Naive thymus-derived CD4-positive, alpha-beta T cell (primary cell): ENCODE measurements at regions of chr19 and their contacts with region 1.

Region 1: DNA sequence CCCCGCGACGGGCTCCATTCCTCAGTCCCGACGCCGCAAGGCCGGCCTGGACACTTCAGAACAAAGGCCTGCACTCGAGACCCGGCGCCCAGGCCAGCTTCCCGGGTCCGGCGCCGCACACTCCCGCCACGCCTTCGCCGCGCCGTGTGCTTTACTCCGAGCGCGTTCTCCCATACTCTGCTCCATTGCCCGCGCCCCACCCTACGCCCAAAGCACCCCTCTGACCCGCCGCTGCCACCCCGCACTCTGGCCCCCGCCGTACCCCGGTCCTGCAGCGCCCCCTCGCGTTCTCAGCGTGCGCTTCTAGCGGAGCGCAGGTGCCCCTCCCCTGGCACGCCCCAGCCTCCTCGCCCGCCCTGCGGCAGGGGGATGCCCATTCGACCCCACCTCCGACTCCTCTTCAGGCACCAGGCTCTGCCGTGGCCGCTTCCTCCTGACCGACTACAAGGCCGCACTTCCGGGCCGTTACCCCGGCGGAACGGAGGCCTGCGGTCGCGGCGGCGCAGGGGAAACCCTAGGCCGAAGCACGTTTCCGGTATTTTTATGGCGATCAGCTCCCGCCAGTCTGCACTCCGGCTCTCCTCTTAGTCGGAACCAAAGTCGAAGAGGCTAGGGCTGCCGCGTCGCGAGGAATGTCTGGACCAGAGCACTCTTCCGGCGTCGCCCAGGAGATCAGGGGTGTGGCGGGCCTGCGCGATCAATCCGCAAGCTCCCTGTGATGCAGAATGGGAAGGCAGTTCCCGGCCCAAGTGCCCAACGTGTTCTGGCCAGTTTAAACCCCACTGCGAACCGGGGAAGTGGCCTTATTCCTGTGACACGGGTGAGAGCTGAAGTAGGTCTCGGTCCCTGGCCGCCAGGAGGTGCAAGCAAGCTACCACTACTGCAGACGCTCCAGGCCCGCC is at the start of gene ZBTB45:
- DNase-seq: peak; percentile 81 to 97 (median 88)
- ATAC-seq: peak; percentile 89
- H3K4me3 ChIP-seq: peak within 1 kb of the TSS; percentile 76
- H3K4me3 Mint-ChIP-seq: peak within 1 kb of the TSS; percentile 90 to 97 (median 95)
- H3K27ac ChIP-seq: peak within 1 kb of the TSS; percentile 86
- H3K27ac Mint-ChIP-seq: peak within 1 kb of the TSS; percentile 92 to 99 (median 97)
- H3K4me1 ChIP-seq: peaks cover 10 to 14% of the 10 kb centered on the region in 2 donors
- H3K4me1 Mint-ChIP-seq: peaks cover 29 to 43% (median 37%) of the 10 kb centered on the region in 7 donors
- H3K27me3 ChIP-seq: no peaks in the 10 kb centered on the region
- H3K27me3 Mint-ChIP-seq: peaks cover 0 to 3% (median 0%) of the 10 kb centered on the region in 5 donors
- total RNA-seq, gene ZBTB45: 9.8 to 19.2 (median 17.0) TPM

Region 2: DNA sequence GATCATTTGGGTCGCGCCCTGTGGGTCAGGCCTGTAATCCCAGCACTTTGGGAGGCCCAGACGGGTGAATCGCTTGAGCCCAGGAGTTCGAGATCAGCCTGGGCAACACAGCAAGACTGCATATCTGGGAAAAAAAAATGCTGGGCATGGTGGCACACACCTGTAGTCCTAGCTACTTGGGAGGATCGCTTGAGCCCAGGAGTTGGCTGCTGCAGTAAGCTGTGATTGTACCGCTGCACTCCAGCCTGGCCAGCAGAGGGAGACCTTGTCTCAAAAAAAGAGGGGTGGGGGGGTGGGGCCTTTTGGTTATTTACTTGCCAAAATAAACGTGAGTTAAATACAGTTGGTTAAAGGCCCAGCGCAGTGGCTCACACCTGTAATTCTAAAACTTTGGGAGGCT is 300.7 kb before region 1 on chr19:
- CTCF ChIA-PET with region 1: no interaction called
- POLR2A ChIA-PET with region 1: no interaction called
- intact Hi-C with region 1: loop called in 1 of 2 experiments (anchors 2 kb)
- DNase-seq: peak in 3 of 9 donors; percentile 16 to 24 (median 24)
- ATAC-seq: peak; percentile 42
- H3K4me3 ChIP-seq: no peak overlapping the region
- H3K4me3 Mint-ChIP-seq: no peak overlapping the region
- H3K27ac ChIP-seq: no peak overlapping the region
- H3K27ac Mint-ChIP-seq: no peak overlapping the region
- H3K4me1 ChIP-seq: no peaks in the 10 kb centered on the region
- H3K4me1 Mint-ChIP-seq: no peaks in the 10 kb centered on the region
- H3K27me3 ChIP-seq: no peaks in the 10 kb centered on the region
- H3K27me3 Mint-ChIP-seq: peaks cover 0 to 5% (median 0%) of the 10 kb centered on the region in 5 donors

Region 3: DNA sequence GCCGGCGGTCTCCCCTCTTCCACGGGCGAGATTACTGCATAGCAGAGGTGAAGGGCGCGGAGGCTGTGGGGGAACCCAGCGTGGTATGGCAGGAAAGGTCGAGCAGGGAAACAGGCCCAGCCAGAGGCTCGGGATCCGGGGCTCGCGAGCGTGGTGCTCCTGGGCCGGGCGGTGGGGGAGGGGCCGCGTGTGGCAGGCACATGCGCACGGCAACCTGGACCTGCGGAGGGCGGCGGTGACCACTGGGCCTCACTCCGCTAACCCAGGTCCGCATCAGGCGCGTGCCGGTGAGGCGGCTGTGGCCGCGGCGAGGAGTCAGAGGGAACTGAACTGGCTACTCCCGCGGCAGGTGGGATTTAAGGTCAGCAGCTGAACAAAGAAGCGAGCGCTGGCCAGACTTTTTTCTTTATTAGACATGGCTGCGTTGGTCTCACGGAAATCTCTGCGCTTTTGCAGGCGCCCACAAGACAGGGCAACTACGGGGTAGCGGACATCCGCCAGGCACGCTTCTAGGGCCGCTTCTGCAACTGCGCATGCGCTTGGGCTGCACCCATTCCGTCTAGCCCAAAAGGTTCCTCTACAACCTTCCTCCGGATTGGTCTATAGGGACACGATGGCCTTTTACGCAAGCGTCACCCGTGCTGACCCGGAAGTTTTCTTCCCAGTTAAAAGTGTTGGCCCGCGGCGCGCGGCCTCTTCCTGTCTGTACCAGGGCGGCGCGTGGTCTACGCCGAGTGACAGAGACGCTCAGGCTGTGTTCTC is 132.8 kb before region 1 on chr19 and contains the start of gene RPS5:
- CTCF ChIA-PET with region 1: interaction called, 3 read pairs
- POLR2A ChIA-PET with region 1: no interaction called
- intact Hi-C with region 1: loop called (anchors 1 kb)
- DNase-seq: peak; percentile 84 to 98 (median 96)
- ATAC-seq: peak; percentile 97
- H3K4me3 ChIP-seq: peak within 1 kb of the TSS; percentile 75
- H3K4me3 Mint-ChIP-seq: peak within 1 kb of the TSS; percentile 89 to 96 (median 94)
- H3K27ac ChIP-seq: peak within 1 kb of the TSS; percentile 94
- H3K27ac Mint-ChIP-seq: peak within 1 kb of the TSS; percentile 94 to 99 (median 97)
- H3K4me1 ChIP-seq: peaks cover 26% of the 10 kb centered on the region in 2 donors
- H3K4me1 Mint-ChIP-seq: peaks cover 22 to 59% (median 45%) of the 10 kb centered on the region in 7 donors
- H3K27me3 ChIP-seq: no peaks in the 10 kb centered on the region
- H3K27me3 Mint-ChIP-seq: peaks cover 0 to 3% (median 0%) of the 10 kb centered on the region in 5 donors
- total RNA-seq, gene RPS5: 911 to 1,684 (median 1,502) TPM

Region 4: GRCh38 chr19:58416604-58417003 is 103.0 kb before region 1 on chr19:
- CTCF ChIA-PET with region 1: no interaction called
- POLR2A ChIA-PET with region 1: no interaction called
- intact Hi-C with region 1: no loop called
- DNase-seq: no peak
- ATAC-seq: no peak
- H3K4me3 ChIP-seq: no peak overlapping the region
- H3K4me3 Mint-ChIP-seq: no peak overlapping the region
- H3K27ac ChIP-seq: no peak overlapping the region
- H3K27ac Mint-ChIP-seq: no peak overlapping the region
- H3K4me1 ChIP-seq: no peaks in the 10 kb centered on the region
- H3K4me1 Mint-ChIP-seq: peaks cover 0 to 4% (median 0%) of the 10 kb centered on the region in 7 donors
- H3K27me3 ChIP-seq: no peaks in the 10 kb centered on the region
- H3K27me3 Mint-ChIP-seq: no peaks in the 10 kb centered on the region

Region 5: DNA sequence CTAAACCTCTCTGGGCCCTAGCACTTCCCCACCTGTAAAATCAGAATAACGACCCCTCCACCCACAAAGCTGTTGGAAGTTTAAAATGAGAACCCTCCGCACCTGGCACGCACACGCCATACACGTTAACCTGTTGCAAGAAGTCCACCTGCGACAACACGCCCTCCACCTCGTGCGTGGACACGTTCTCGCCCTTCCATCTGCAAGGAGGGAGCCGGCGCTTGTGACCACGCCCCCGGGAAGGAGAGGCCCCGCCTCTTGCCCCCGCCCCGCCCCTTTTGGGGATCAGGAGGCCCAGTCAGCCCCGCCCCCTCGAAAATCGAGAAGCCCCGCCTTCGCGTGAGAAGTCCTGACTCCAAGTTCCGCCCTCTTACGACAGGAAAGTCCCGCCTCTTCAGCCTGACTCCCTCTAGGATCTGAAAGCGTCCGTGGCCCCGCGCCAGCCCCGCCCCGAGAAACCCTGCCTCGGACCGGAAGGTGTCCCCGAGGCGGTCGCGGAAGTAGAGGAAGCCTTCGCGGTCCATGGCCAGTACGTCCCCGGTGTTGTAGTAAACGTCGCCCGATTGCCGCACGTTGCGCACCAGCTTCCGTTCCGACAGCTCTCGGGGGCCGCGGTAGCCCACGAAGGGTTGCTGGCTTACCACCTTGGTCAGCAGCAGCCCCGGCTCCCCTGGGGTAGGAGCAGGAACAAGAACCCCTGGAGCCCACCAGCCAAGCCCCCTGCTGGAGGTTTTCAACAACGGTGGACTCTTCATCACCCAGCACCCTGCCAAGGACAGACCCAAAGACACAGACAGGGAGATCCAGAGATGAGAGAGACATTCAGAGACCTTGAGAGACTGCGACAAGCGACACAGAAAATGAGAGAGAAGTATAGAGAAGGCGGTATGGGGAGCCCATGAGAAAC is 20.3 kb before region 1 on chr19:
- CTCF ChIA-PET with region 1: no interaction called
- POLR2A ChIA-PET with region 1: interaction called, 10 read pairs
- intact Hi-C with region 1: loop called (anchors 1 kb)
- DNase-seq: peak; percentile 76 to 96 (median 87)
- ATAC-seq: peak; percentile 93
- H3K4me3 ChIP-seq: peak overlapping the region; percentile 66
- H3K4me3 Mint-ChIP-seq: peak overlapping the region; percentile 88 to 98 (median 94)
- H3K27ac ChIP-seq: peak overlapping the region; percentile 72
- H3K27ac Mint-ChIP-seq: peak overlapping the region; percentile 90 to 97 (median 95)
- H3K4me1 ChIP-seq: peaks cover 12 to 15% of the 10 kb centered on the region in 2 donors
- H3K4me1 Mint-ChIP-seq: peaks cover 8 to 32% (median 21%) of the 10 kb centered on the region in 7 donors
- H3K27me3 ChIP-seq: no peaks in the 10 kb centered on the region
- H3K27me3 Mint-ChIP-seq: no peaks in the 10 kb centered on the region

Region 6: GRCh38 chr19:58558623-58559274 is 39.1 kb after region 1 on chr19:
- CTCF ChIA-PET with region 1: interaction called, 13 read pairs
- POLR2A ChIA-PET with region 1: interaction called, 32 read pairs
- intact Hi-C with region 1: loop called (anchors 1 kb)
- DNase-seq: peak; percentile 99 to 100 (median 100)
- ATAC-seq: peak; percentile 79
- H3K4me3 ChIP-seq: peak overlapping the region; percentile 97
- H3K4me3 Mint-ChIP-seq: peak overlapping the region; percentile 87 to 98 (median 96)
- H3K27ac ChIP-seq: peak overlapping the region; percentile 97
- H3K27ac Mint-ChIP-seq: peak overlapping the region; percentile 93 to 99 (median 98)
- H3K4me1 ChIP-seq: peaks cover 51 to 63% of the 10 kb centered on the region in 2 donors
- H3K4me1 Mint-ChIP-seq: peaks cover 18 to 86% (median 77%) of the 10 kb centered on the region in 7 donors
- H3K27me3 ChIP-seq: no peaks in the 10 kb centered on the region
- H3K27me3 Mint-ChIP-seq: peaks cover 0 to 4% (median 0%) of the 10 kb centered on the region in 5 donors

Region 7: DNA sequence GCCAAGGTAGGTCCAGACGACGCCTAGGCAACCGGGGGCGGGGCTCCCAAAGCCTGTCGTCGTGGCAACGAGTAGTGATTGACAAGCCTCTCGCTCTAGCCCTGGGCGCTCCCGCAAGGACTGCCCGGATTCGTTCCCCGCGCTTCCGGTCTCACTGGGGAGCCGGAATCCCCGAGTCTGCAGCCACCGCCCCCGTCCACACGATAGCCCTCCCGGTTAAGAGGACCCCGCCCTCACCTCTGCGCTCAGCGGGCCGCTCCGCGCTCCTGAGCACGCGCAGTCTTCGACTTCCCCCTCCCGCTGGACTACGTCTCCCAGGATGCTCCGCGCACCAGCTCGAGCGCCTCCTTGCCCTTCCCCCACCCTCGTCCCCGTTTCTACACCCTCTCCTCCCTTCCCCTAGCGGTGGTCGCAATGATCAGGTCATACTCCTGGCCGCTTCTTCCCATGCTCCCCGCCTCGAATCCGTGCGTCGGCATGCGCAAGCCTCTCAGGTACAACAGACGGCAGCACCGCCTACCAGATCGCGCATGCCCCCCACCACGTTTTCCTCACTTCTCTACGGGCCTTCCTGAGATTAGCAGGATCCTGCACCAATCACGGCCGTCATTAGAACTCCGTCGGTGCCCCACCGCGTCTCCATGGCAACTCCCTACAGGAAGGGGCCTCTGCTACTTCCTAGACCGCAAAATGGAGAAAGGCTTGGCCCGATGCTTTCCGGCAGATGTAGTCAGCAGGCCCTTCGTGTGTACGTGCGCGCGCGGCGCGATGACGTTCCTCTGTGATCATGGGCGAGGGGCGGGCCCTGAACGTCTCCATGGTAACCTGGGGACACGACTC is 53.4 kb after region 1 on chr19 and contains the start of gene MZF1:
- CTCF ChIA-PET with region 1: interaction called, 46 read pairs
- POLR2A ChIA-PET with region 1: interaction called, 45 read pairs
- intact Hi-C with region 1: loop called (anchors 1 kb)
- DNase-seq: peak; percentile 97 to 100 (median 100)
- ATAC-seq: peak; percentile 81
- H3K4me3 ChIP-seq: peak within 1 kb of the TSS; percentile 71
- H3K4me3 Mint-ChIP-seq: peak within 1 kb of the TSS; percentile 82 to 100 (median 98)
- H3K27ac ChIP-seq: peak within 1 kb of the TSS; percentile 97
- H3K27ac Mint-ChIP-seq: peak within 1 kb of the TSS; percentile 97 to 100 (median 100)
- H3K4me1 ChIP-seq: peaks cover 19 to 20% of the 10 kb centered on the region in 2 donors
- H3K4me1 Mint-ChIP-seq: peaks cover 27 to 50% (median 33%) of the 10 kb centered on the region in 7 donors
- H3K27me3 ChIP-seq: no peaks in the 10 kb centered on the region
- H3K27me3 Mint-ChIP-seq: peaks cover 0 to 4% (median 0%) of the 10 kb centered on the region in 5 donors
- total RNA-seq, gene MZF1: 35.0 to 51.8 (median 44.9) TPM